Activated T-helper 1 cell treated with anti-CD3 and anti-CD28 coated beads, Interleukin-12 subunit alpha, Interleukin-12 subunit beta, Interleukin-2, Interleukin-4 antibody, amounts not matched to agents 30 ng/mL and 10 ng/mL and 1 ng/mL, durations not matched to agents 14 hours and 24 hours and 36 hours (primary cell): ENCODE measurements at regions of chr6 and their contacts with region 1.

Region 1: DNA sequence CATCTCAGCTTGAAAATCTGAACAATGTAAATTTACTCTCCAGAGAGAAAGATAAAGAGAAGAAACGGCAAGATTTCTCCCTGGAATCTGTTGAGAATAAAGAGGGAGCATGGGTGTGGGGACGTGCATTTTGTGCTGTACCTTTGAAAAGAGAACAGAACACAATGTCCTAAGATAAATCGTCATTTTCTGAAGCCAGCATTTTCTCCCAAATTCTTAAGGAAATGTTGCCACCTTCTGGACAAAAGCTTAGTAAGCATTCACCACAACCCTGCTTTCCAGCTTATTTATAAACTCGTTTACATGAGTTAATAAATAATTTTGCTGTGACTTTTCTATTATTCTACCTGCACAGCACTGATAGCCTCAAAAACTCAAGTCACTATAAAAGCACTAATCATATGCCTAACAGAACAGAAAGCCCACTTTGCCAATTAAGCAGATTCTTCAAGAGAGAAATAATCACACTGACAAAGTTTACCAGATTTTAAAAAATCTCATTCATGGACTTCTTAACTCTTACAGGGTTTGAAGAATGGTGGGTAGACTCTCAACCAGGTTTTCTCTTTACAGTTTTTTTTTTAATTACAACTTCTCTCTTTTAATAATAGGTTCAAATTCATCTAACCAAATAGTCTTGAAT is 155.8 kb downstream of the MBOAT1 start:
- DNase-seq: no peak
- H3K4me3 Mint-ChIP-seq: no peak overlapping the region
- H3K27ac Mint-ChIP-seq: no peak overlapping the region
- H3K4me1 Mint-ChIP-seq: no peaks in the 10 kb centered on the region
- H3K27me3 Mint-ChIP-seq: no peaks in the 10 kb centered on the region

Region 2: GRCh38 chr6:18997375-18997826 is 1059.1 kb before region 1 on chr6:
- intact Hi-C with region 1: loop called (anchors 5 kb)
- DNase-seq: no peak
- H3K4me3 Mint-ChIP-seq: no peak overlapping the region
- H3K27ac Mint-ChIP-seq: no peak overlapping the region
- H3K4me1 Mint-ChIP-seq: no peaks in the 10 kb centered on the region
- H3K27me3 Mint-ChIP-seq: no peaks in the 10 kb centered on the region

Region 3: GRCh38 chr6:20126789-20127653 is 70.5 kb after region 1 on chr6:
- intact Hi-C with region 1: no loop called
- DNase-seq: peak; percentile 46
- H3K4me3 Mint-ChIP-seq: no peak overlapping the region
- H3K27ac Mint-ChIP-seq: no peak overlapping the region
- H3K4me1 Mint-ChIP-seq: peaks cover 8% of the 10 kb centered on the region
- H3K27me3 Mint-ChIP-seq: no peaks in the 10 kb centered on the region